IMR-90 (cell line): ENCODE measurements at regions of chr2 and their contacts with region 1.

Region 1: DNA sequence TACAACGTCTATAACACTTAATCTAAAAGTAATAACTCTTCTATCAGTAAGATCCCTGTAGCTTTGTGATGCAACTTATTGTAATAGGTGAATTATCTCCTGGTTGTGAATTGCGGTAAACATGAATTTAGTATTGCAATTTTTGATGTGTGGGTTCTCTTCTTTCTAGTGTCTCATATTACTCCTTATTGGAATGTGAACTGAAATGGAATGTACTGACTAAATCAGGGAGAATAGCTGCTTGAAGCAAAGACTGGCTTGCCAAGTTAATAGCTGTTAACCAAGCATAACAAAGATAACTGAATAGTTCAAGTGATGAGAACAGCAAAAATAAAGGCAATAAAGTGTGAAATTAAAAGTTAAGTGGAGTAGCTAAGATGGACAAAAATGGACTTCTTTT is 60.5 kb upstream of the TFPI start:
- DNase-seq: peak; percentile 58
- ATAC-seq: peak; percentile 75
- H3K4me3 ChIP-seq: no peak overlapping the region
- H3K27ac ChIP-seq: no peak overlapping the region
- H3K4me1 ChIP-seq: peaks cover 2% of the 10 kb centered on the region; the same call in 1 of the 2 replicates
- H3K27me3 ChIP-seq: no peaks in the 10 kb centered on the region
- CTCF ChIP-seq: no peak
- POLR2A ChIP-seq: no peak
- RAD21 ChIP-seq: no peak

Region 2: GRCh38 chr2:188369365-188369764 is 754.6 kb after region 1 on chr2:
- CTCF ChIA-PET with region 1: no interaction called
- POLR2A ChIA-PET with region 1: no interaction called
- dilution Hi-C with region 1: no loop called
- in situ Hi-C with region 1: no loop called
- intact Hi-C with region 1: loop called (anchors 10 kb)
- DNase-seq: peak; percentile 45
- ATAC-seq: peak; percentile 67; the same call in 1 of the 2 replicates
- H3K4me3 ChIP-seq: no peak overlapping the region
- H3K27ac ChIP-seq: no peak overlapping the region
- H3K4me1 ChIP-seq: no peaks in the 10 kb centered on the region
- H3K27me3 ChIP-seq: no peaks in the 10 kb centered on the region
- CTCF ChIP-seq: peak; percentile 59
- POLR2A ChIP-seq: no peak
- RAD21 ChIP-seq: peak; percentile 63